OCI-LY7 (cell line): ENCODE measurements at regions of chr7 and their contacts with region 1.

Region 1: GRCh38 chr7:136389933-136390332 is 412.8 kb upstream of the MTPN start:
- DNase-seq: no peak
- H3K4me3 ChIP-seq: no peak overlapping the region
- H3K27ac ChIP-seq: no peak overlapping the region
- H3K4me1 ChIP-seq: no peaks in the 10 kb centered on the region
- CTCF ChIP-seq: no peak

Region 2: GRCh38 chr7:136405931-136406777 is 16.2 kb after region 1 on chr7:
- CTCF ChIA-PET with region 1: no interaction called
- POLR2A ChIA-PET with region 1: interaction called, 17 read pairs
- intact Hi-C with region 1: no loop called
- DNase-seq: peak; percentile 82
- H3K4me3 ChIP-seq: no peak overlapping the region
- H3K27ac ChIP-seq: no peak overlapping the region
- H3K4me1 ChIP-seq: peaks cover 30% of the 10 kb centered on the region
- CTCF ChIP-seq: peak; percentile 87